ENCODE measurements at regions of chr3 and their contacts with region 1.

Region 1: GRCh38 chr3:149120051-149120972 is 9.1 kb upstream of the HPS3 start:
- DNase-seq: peak in 1 of 2 experiments; percentile 54
- H3K4me3 ChIP-seq: no peak overlapping the region
- H3K27ac ChIP-seq: no peak overlapping the region
- H3K4me1 ChIP-seq: no peaks in the 10 kb centered on the region
- H3K27me3 ChIP-seq: no peaks in the 10 kb centered on the region
- CTCF ChIP-seq: peak; percentile 76

Region 2: DNA sequence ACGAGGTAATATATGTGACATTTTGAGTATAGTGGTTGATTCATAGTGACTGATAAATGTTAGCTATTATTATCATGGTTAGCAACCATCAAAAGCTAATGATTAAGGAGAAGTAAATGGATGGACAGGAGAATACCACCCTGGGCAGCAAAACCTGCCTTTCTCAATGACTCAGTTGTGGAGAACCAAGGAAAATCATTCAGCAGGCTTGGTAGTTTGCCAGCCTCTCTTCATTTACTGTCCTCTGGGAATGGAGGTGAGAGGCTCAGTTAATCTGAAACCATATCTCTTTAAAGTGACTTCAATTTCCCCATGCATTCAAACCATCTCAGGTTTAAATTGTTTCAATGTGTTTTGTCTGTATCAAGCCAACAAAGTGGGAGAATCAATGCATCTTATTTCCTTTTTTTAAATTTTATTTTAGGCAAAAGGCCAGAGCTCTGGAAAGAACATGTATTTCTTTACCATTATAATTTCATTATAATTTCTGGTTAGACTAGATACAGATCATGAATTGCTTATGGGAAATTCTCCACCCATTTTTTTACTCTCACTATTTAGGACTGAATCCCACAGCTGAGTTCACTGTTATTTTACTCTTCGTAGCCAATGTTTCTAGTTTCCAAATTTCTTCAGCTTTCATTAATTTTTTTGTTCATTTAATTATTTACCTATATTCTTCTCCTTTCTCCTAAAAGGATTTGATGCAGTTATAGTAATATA is 210.5 kb after region 1 on chr3:
- CTCF ChIA-PET with region 1: interaction called, 4 read pairs
- POLR2A ChIA-PET with region 1: no interaction called
- intact Hi-C with region 1: loop called (anchors 1 kb)
- DNase-seq: no peak
- H3K4me3 ChIP-seq: no peak overlapping the region
- H3K27ac ChIP-seq: no peak overlapping the region
- H3K4me1 ChIP-seq: peaks cover 5% of the 10 kb centered on the region; the same call in 1 of the 2 replicates
- H3K27me3 ChIP-seq: no peaks in the 10 kb centered on the region
- CTCF ChIP-seq: no peak

Region 3: GRCh38 chr3:149373235-149374125 is 253.2 kb after region 1 on chr3:
- CTCF ChIA-PET with region 1: no interaction called
- POLR2A ChIA-PET with region 1: no interaction called
- intact Hi-C with region 1: no loop called
- DNase-seq: peak in 1 of 2 experiments; percentile 91
- H3K4me3 ChIP-seq: peak overlapping the region; percentile 37; the same call in 1 of the 2 replicates
- H3K27ac ChIP-seq: peak overlapping the region; percentile 99
- H3K4me1 ChIP-seq: peaks cover 82% of the 10 kb centered on the region
- H3K27me3 ChIP-seq: no peaks in the 10 kb centered on the region
- CTCF ChIP-seq: no peak

Region 4: DNA sequence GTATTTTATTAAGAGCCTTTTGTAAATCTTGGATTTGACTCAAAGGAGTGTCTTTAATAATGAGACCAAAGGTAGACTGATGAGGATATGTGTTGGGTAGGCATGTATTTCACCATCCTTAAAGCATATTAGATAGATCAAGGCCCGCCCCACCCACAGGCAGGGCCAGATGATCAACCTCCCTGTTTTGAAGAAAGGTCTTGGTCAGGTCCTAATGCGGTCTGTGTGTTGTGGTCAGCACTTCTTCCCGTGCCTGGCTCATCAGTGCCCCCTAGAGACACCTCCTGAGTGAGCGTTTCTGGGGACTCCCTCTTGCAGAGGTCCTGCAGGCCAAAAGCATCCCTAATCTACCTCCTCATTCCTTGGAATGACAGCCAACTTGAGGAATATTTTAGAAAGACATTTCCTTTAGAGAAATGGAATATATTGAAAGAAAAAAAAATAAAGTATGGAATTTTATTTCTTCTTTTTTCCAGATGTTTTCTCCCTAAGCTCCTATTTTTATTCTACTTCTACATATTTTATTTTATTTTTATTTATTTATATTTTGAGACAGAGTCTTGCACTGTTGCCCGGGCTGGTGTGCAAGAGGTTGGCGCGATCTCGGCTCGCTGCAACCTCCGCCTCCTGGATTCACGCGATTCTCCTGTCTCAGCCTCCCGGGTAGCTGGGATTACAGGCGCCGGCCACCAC is 360.2 kb after region 1 on chr3:
- CTCF ChIA-PET with region 1: no interaction called
- POLR2A ChIA-PET with region 1: no interaction called
- intact Hi-C with region 1: loop called (anchors 1 kb)
- DNase-seq: peak; percentile 81 to 89
- H3K4me3 ChIP-seq: no peak overlapping the region
- H3K27ac ChIP-seq: peak overlapping the region; percentile 46
- H3K4me1 ChIP-seq: peaks cover 19% of the 10 kb centered on the region
- H3K27me3 ChIP-seq: no peaks in the 10 kb centered on the region
- CTCF ChIP-seq: peak; percentile 87